ENCODE measurements at regions of chr15 and their contacts with region 1.

Region 1: DNA sequence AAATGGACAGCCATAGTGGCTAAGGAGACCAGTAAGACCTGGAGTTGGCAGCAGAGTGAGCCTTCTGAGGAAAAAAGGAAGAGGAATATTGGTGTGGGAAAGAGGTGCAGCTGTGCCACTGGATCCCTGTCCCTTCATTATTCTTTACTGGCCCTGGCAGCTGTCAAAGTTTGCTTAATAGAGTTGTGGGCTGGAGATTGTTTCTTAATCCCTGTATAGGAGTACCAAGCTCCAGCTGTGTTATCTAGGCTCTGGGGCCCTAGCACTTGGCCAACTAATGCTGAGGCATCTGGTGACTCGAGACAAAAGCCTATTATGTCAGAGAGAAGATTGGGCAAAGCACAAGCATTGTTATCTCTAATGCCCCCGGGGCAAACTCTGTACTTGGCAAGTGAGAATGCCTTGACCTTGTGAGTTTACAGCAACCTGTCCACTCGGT is 61.4 kb downstream of the ZNF609 start:
- DNase-seq: peak; percentile 74
- H3K4me3 Mint-ChIP-seq: no peak overlapping the region
- H3K27ac Mint-ChIP-seq: peak overlapping the region; percentile 68
- H3K4me1 Mint-ChIP-seq: peaks cover 80% of the 10 kb centered on the region
- H3K27me3 Mint-ChIP-seq: no peaks in the 10 kb centered on the region
- CTCF ChIP-seq: no peak

Region 2: GRCh38 chr15:64634576-64635498 is 113.1 kb after region 1 on chr15:
- CTCF ChIA-PET with region 1: no interaction called
- intact Hi-C with region 1: loop called (anchors 5 kb)
- DNase-seq: peak; percentile 39
- H3K4me3 Mint-ChIP-seq: peak overlapping the region; percentile 55
- H3K27ac Mint-ChIP-seq: peak overlapping the region; percentile 79
- H3K4me1 Mint-ChIP-seq: peaks cover 35% of the 10 kb centered on the region
- H3K27me3 Mint-ChIP-seq: no peaks in the 10 kb centered on the region
- CTCF ChIP-seq: no peak

Region 3: GRCh38 chr15:64911311-64912191 is 389.8 kb after region 1 on chr15 and contains the start of gene ANKDD1A:
- CTCF ChIA-PET with region 1: no interaction called
- intact Hi-C with region 1: no loop called
- DNase-seq: peak; percentile 70
- H3K4me3 Mint-ChIP-seq: peak within 1 kb of the TSS; percentile 80
- H3K27ac Mint-ChIP-seq: no peak within 1 kb of the TSS
- H3K4me1 Mint-ChIP-seq: peaks cover 8% of the 10 kb centered on the region
- H3K27me3 Mint-ChIP-seq: peaks cover 87% of the 10 kb centered on the region
- CTCF ChIP-seq: no peak
- total RNA-seq, gene ANKDD1A: 0.37 and 0.42 TPM in 2 replicates

Measured in Calu3 (cell line).